ENCODE measurements at regions of chr7 and their contacts with region 1.

Region 1: DNA sequence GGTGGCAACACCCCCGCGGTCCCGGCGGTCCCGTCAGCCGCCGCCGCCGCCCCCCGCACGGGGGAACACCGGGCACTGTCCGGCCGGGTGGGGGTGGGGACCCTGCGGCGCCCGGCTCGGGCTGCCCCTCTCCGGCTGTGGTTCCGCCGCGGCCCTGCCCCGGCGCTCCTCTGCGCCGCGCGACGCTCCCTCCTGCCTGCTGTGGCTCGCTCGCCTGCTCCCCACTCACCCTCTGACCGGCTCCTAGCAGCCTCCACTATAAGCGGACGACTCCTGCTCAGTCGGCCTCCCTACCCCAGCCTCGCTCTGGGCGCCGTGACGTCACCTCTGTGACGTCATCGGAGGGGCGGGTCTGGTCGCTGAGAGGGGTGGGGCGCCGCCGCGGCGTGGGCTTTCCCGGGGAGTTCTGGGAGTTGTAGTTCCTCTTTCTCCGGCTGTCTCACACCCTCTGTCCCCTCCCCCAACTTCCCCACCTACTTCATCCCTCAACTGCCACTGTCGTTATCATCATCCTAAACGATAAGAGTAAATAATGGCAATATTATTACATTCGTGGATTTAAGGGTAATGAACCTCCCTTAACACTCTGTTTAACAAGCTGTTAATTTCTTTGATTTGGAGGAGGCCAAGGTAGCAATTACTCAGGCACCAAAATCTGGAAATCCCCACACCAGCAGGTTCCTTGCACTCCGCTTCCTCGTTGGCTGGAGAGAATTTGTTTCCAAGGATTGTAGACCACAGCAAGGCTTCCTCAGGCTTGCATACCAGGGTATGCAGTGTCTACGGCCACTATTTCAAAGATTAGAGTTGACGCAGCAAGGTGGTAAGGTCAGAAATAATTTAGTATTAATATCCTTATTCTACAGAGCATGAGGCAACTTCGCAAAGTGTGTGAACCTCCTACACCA is at the start of gene UBE2H:
- DNase-seq: peak; percentile 92 to 94
- ATAC-seq: peak; percentile 83 to 93 (median 92)
- H3K4me3 ChIP-seq: peak within 1 kb of the TSS; percentile 80 to 99 (median 89)
- H3K27ac ChIP-seq: peak within 1 kb of the TSS; percentile 90 to 99 (median 96)
- H3K4me1 ChIP-seq: peaks cover 0 to 38% (median 24%) of the 10 kb centered on the region in 9 donors
- H3K27me3 ChIP-seq: no peaks in the 10 kb centered on the region
- CTCF ChIP-seq: no peak
- total RNA-seq, gene UBE2H: 73.5 to 222 (median 170) TPM

Region 2: GRCh38 chr7:129644634-129645230 is 308.2 kb before region 1 on chr7:
- intact Hi-C with region 1: no loop called
- DNase-seq: no peak
- ATAC-seq: peak in 3 of 8 donors; percentile 41 to 52 (median 44)
- H3K4me3 ChIP-seq: no peak overlapping the region
- H3K27ac ChIP-seq: no peak overlapping the region
- H3K4me1 ChIP-seq: peaks cover 0 to 32% (median 17%) of the 10 kb centered on the region in 9 donors
- H3K27me3 ChIP-seq: no peaks in the 10 kb centered on the region
- CTCF ChIP-seq: peak in 8 of 9 donors; percentile 11 to 67 (median 57)

Region 3: DNA sequence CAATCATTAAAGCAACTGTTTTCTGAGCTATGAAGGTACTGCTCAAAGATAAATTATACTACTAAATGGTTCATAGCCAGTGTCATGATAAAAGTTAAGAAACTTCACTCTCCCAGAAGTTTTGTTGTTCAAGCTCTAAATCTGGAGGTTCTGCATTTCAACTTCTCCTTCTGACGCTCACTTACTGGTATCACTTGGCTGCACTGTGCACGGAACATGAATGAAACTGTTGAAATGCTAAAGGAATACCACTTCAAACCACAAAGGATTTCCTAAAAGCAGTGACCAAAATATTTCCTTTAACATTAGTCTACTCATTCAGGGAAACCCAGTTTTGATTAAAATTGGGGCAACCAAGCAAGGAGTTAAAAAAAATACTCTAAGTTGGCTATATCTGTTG is 93.7 kb before region 1 on chr7:
- intact Hi-C with region 1: loop called in 4 of 10 experiments (anchors 5 to 10 kb)
- DNase-seq: no peak
- ATAC-seq: peak in 1 of 8 donors; percentile 30
- H3K4me3 ChIP-seq: peak overlapping the region in 1 of 10 donors; percentile 3
- H3K27ac ChIP-seq: peak overlapping the region; percentile 5 to 91 (median 78)
- H3K4me1 ChIP-seq: peaks cover 29 to 98% (median 84%) of the 10 kb centered on the region in 9 donors
- H3K27me3 ChIP-seq: no peaks in the 10 kb centered on the region
- CTCF ChIP-seq: no peak

Measured in heart right ventricle (tissue), 16 donors.